ENCODE measurements at regions of chr1 and their contacts with region 1.

Region 1: DNA sequence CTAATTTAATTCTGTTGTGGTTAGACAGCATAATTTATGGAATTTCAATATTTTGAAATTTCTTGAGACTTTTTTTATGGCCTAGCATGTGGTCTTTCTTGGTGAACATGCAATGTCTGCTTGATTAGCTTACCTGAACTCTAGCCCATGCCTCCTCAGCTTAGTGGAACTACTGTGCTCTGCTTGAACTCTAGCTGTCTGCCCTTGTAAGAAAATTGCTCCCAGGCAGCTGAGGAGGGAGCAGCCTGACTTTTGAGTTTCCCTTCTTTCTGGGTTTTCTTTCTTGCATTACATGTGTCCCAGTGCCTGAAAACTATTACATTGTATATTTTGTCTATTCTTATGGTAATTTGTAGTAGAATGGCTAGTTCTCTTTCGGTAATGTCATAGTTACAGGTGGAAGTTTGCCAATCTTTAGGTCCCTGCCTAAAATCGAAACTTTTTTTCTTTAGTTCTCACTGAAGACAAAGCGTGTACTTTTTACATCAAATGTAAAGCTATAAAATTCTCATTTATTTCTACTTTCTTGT is 105.3 kb downstream of the MAST2 start:
- DNase-seq: no peak
- H3K4me3 Mint-ChIP-seq: no peak overlapping the region
- H3K27ac Mint-ChIP-seq: no peak overlapping the region
- H3K4me1 Mint-ChIP-seq: no peaks in the 10 kb centered on the region
- H3K27me3 Mint-ChIP-seq: no peaks in the 10 kb centered on the region

Region 2: DNA sequence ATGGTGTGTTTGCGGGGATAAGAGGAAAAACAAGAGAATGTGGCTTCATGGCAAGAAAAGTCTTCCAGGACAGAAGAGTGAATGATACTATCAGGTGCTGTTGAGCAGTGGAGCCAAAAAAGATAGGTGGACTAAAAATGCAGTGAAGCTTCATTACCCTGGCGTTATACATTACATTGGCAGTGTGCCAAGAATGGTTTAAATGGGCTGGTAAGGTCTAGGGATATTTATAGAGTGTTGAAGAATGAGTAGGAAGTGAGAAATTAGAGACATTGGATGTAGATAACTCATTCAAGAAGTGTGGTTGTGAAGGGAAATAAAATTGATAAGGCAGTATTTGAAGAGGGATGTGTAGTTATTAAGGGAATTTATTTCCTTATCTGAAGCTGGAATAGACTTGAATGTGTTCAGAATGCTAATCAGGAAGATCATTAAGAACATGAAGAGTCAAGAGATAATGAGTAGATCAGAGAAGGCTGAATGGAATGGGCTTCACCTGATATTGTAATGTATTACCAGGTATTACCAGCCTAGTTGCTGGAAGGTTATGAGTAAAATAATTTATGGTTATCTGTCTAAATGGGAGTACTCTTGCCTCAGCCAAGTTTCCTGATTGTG is 32.6 kb before region 1 on chr1:
- CTCF ChIA-PET with region 1: no interaction called
- POLR2A ChIA-PET with region 1: no interaction called
- DNase-seq: no peak
- H3K4me3 Mint-ChIP-seq: no peak overlapping the region
- H3K27ac Mint-ChIP-seq: no peak overlapping the region
- H3K4me1 Mint-ChIP-seq: peaks cover 3% of the 10 kb centered on the region
- H3K27me3 Mint-ChIP-seq: no peaks in the 10 kb centered on the region

Region 3: DNA sequence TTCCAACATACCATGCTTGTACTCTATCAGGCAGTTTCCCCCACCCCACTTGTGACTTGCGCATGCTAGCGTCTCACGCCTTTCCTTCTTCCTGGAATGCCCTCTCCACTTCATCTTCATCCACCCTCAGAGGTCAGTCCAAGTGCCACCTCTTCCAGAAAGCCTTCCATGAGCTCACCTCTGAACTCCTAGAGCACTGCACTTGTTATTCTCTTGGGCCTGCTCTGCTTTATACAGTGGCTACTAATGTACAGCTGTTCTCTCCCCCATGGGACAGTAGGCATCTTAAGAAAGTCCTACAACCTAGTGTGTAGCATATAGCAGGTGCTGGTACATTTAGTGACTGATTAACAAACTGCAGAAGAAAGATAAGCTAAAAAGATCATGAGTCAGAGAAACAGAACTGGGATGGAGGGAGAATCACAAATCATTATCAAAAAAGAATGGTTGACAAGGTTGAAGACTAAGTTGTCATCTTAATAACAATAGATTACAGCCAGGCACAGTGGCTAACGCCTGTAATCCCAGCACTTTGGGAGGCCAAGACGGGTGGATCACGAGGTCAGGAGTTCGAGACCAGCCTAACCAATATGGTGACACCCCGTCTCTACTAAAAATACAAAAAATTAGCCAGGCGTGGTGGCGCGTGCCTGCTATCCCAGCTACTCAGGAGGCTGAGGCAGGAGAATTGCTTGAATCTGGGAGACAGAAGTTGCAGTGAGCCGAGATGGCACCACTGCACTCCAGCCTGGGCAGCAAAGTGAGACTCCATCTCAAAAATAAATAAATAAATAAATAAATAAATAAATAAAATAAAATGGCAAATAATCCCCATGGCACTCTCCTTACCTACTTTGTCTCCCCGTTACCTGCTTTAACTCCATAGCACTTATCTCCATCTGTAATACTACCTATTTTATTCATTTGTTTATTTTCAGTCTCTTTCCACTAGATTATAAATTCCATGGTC is 249.9 kb after region 1 on chr1:
- CTCF ChIA-PET with region 1: no interaction called
- POLR2A ChIA-PET with region 1: no interaction called
- DNase-seq: no peak
- H3K4me3 Mint-ChIP-seq: no peak overlapping the region
- H3K27ac Mint-ChIP-seq: no peak overlapping the region
- H3K4me1 Mint-ChIP-seq: no peaks in the 10 kb centered on the region
- H3K27me3 Mint-ChIP-seq: peaks cover 5% of the 10 kb centered on the region

Region 4: DNA sequence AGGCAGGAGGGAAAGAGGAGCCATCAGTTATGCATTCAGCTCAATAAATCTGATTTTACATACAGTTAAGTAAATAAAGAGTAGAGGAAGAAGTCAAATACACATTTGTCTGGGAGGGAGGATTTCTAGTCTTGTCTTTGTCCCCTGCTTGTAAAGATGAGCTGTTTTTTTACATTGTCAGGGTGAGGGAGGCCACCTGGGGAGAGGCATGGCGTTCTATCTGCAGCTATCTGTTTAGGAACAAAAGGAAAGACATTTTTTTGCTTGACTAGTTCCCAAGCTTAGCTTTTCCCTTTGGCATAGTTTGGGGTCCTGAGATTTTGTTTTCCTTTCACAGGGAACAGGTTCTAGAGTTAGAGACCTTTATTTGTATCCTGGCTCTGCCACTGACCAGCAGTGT is 353.8 kb after region 1 on chr1:
- CTCF ChIA-PET with region 1: no interaction called
- POLR2A ChIA-PET with region 1: interaction called, 18 read pairs
- DNase-seq: no peak
- H3K4me3 Mint-ChIP-seq: no peak overlapping the region
- H3K27ac Mint-ChIP-seq: no peak overlapping the region
- H3K4me1 Mint-ChIP-seq: no peaks in the 10 kb centered on the region
- H3K27me3 Mint-ChIP-seq: no peaks in the 10 kb centered on the region